Activated naive CD4-positive, alpha-beta T cell treated with anti-CD3 and anti-CD28 coated beads, Interleukin-2, amount 10 ng/mL, durations not matched to agents 7 days and 5 days (primary cell): ENCODE measurements at regions of chr3 and their contacts with region 1.

Region 1: GRCh38 chr3:47324278-47324865 is 41.6 kb downstream of the KLHL18 start:
- DNase-seq: peak; percentile 64
- H3K4me3 Mint-ChIP-seq: no peak overlapping the region
- H3K27ac Mint-ChIP-seq: no peak overlapping the region
- H3K4me1 Mint-ChIP-seq: peaks cover 3% of the 10 kb centered on the region
- H3K27me3 Mint-ChIP-seq: no peaks in the 10 kb centered on the region

Region 2: DNA sequence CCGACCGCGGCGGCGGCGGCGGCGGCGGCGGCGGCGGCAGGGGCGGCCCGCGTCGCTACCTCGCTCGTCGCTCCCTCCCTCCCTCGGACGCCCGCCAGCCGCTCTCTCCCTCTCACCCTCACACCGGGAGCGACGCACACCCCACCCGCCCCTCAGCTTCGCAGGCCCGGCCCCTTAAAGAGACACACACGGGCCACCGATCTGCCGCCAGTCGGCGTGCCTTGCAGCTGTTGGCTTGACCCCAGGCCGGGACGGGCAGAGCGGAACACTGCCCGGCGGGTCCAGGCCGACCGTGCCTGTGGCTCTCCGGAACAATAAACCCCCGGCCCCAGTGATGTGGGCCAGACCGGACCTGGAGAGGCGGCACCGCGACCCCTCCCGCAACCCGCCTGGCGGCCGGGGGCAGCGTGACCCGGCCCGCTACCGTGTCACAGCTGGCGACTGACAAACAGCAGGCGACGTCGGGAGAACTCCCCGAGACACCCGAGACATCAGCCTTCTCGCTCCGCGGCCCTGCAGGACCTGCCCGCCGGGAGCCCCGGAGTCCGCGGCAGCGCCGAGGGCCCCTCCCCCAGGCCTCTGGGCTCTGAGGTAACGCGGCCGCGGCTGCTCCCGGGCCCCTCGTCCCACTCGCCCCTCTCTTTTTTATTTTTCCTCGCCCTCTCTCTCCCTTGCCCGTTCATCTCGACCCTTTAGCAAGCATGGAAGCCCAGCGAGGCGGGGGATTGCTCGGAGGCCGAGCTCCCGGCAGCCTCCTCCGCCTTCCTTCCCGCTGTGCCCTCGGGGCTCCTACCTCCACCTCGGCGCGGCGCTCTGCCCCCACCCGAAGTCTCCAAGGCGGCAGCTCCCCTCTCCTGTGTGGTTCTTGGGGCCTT is 160.1 kb before region 1 on chr3 and contains the start of gene SETD2:
- CTCF ChIA-PET with region 1: interaction called, 12 read pairs
- DNase-seq: peak; percentile 92
- H3K4me3 Mint-ChIP-seq: peak within 1 kb of the TSS; percentile 99
- H3K27ac Mint-ChIP-seq: peak within 1 kb of the TSS; percentile 99
- H3K4me1 Mint-ChIP-seq: peaks cover 50% of the 10 kb centered on the region
- H3K27me3 Mint-ChIP-seq: no peaks in the 10 kb centered on the region

Region 3: DNA sequence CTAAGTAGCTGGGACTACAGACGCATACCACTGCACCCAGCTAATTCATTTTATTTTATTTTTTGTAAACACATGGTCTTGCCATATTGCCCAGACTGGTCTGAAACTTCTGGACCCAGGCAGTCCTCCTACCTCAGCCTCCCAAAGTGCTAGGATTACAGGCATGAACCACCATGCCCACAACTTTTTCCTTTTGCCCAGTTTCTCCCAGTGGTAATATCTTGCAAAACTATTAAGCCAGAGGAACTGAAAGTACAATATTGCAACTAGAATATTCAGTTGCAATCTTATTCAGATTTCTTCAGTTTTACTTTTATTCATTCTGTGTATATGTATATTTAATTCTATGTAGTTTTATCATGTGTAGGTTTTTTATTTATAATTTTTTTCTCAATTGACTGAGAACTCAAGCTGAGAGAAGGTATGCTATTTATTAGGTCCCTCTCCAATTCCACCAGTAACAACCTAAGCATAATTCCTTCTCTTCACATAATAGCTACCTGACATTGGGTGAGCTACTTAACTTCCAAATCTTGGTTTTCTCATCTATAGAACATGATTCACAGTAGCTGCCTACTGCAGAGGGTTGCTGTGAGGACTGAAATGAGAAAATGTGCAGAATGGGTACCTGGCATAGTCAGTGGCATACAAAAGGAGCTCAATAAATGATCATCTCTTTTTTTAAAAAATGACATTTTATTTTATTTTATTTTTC is 10.9 kb before region 1 on chr3:
- CTCF ChIA-PET with region 1: interaction called, 11 read pairs
- DNase-seq: no peak
- H3K4me3 Mint-ChIP-seq: no peak overlapping the region
- H3K27ac Mint-ChIP-seq: no peak overlapping the region
- H3K4me1 Mint-ChIP-seq: no peaks in the 10 kb centered on the region
- H3K27me3 Mint-ChIP-seq: no peaks in the 10 kb centered on the region